ENCODE measurements at regions of chr17 and their contacts with region 1.

Region 1: DNA sequence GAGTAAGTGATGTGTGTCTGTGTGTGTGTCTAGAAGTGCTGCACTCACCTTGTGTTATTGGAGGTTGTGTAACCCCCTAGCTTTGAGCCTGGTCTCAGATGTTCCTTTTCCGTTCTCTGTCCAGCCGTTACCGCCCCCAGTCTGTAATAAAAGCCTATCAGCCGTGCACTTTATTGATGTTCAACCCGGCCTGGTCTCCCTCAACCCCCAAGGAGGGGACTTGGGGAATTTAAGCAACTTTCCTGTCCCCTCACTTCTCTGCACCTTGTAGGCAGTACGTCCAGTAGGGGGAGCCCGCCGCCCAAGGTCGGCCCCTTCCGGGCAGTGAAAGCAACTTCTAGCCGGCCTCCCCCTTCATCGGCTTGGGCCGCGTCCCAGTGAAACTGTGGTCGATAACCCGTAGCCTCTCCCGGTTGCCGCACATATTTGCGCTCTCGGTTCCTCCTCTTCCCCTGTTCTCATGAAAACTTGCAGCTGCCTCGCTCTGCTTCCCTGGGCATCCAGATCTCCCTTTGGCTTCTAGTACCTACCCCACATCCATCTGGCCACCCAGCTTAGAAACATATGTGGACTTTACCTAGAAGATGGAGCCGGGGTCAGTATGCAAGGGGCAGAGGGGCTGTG is 7.9 kb downstream of the PNPO start:
- DNase-seq: peak; percentile 86
- H3K4me3 Mint-ChIP-seq: peak overlapping the region; percentile 49
- H3K27ac Mint-ChIP-seq: peak overlapping the region; percentile 21
- H3K4me1 Mint-ChIP-seq: peaks cover 14% of the 10 kb centered on the region
- H3K27me3 Mint-ChIP-seq: no peaks in the 10 kb centered on the region
- CTCF ChIP-seq: peak; percentile 86

Region 2: DNA sequence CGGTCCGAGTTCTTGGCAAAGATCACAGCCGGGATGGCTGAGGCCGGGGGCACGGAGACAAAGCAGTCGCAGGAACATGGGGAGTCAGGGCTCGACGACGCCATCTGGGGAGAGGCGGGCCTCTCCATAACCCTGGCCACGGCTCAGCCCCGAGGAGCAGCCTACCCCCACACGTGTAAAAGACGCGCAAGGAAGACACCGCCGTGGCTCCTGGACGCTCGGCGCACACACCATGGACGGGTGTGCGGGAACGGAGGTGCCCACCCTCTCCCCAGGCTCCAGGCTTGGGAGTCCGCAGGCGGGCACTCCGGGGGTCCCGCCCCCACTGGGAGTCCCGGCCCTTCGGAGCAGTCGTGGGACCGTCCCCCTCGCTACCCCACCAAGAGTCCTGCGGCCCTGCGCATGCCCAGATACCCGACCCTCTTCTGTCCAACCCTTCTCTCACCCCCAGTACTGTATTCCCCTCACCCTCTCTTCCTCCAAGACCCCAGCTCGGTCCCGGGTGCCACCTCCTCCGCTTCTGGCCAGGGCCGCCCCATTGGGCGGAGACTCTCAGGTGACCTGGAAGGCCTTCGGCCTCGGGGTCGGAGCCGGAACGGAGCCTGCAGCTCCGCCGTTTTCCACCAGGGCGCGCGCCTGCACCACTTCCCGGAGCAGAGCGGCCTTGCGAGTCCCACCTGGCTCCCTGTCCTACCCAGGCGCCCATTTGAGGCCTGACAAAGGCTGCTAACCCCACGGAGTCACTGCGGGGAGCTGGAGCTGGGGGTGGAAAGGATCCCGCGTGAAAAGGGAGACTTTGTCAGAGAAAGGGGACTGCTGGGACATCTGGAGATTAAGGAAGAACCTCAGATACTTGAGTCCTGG is 108.3 kb before region 1 on chr17 and contains the start of gene SCRN2:
- CTCF ChIA-PET with region 1: interaction called, 19 read pairs
- POLR2A ChIA-PET with region 1: interaction called, 6 read pairs
- intact Hi-C with region 1: loop called (anchors 1 kb)
- DNase-seq: peak; percentile 88
- H3K4me3 Mint-ChIP-seq: peak within 1 kb of the TSS; percentile 81
- H3K27ac Mint-ChIP-seq: peak within 1 kb of the TSS; percentile 65
- H3K4me1 Mint-ChIP-seq: peaks cover 7% of the 10 kb centered on the region
- H3K27me3 Mint-ChIP-seq: no peaks in the 10 kb centered on the region
- CTCF ChIP-seq: peak; percentile 99
- total RNA-seq, gene SCRN2: 15.7 and 16.2 TPM in 2 replicates

Region 3: DNA sequence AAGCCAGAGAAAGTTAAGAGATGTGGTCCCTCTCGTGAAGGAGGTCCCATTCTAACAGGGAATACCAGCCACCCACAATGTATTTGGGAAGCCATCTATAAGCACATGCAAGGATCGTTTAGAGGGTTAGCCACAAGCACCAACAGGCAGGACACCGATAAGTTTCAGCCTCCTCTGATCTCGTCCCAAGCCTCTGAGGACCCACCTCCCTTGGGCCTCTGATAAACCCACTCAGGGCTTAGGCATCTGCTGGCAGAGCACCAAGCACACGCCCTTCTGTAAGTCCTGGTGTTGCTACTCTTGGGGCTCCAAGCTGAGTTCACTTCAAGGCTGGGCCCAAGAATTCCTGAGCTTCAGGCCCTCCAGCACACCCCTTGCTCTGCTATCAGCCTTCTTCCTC is 13.3 kb before region 1 on chr17:
- CTCF ChIA-PET with region 1: interaction called, 18 read pairs
- POLR2A ChIA-PET with region 1: interaction called, 23 read pairs
- intact Hi-C with region 1: no loop called
- DNase-seq: peak; percentile 73
- H3K4me3 Mint-ChIP-seq: peak overlapping the region; percentile 43
- H3K27ac Mint-ChIP-seq: peak overlapping the region; percentile 95
- H3K4me1 Mint-ChIP-seq: peaks cover 38% of the 10 kb centered on the region
- H3K27me3 Mint-ChIP-seq: no peaks in the 10 kb centered on the region
- CTCF ChIP-seq: no peak

Region 4: GRCh38 chr17:47978324-47978723 is 29.1 kb after region 1 on chr17:
- CTCF ChIA-PET with region 1: interaction called, 336 read pairs
- POLR2A ChIA-PET with region 1: interaction called, 256 read pairs
- intact Hi-C with region 1: no loop called
- DNase-seq: peak; percentile 47
- H3K4me3 Mint-ChIP-seq: no peak overlapping the region
- H3K27ac Mint-ChIP-seq: no peak overlapping the region
- H3K4me1 Mint-ChIP-seq: no peaks in the 10 kb centered on the region
- H3K27me3 Mint-ChIP-seq: no peaks in the 10 kb centered on the region
- CTCF ChIP-seq: peak; percentile 50

Region 5: DNA sequence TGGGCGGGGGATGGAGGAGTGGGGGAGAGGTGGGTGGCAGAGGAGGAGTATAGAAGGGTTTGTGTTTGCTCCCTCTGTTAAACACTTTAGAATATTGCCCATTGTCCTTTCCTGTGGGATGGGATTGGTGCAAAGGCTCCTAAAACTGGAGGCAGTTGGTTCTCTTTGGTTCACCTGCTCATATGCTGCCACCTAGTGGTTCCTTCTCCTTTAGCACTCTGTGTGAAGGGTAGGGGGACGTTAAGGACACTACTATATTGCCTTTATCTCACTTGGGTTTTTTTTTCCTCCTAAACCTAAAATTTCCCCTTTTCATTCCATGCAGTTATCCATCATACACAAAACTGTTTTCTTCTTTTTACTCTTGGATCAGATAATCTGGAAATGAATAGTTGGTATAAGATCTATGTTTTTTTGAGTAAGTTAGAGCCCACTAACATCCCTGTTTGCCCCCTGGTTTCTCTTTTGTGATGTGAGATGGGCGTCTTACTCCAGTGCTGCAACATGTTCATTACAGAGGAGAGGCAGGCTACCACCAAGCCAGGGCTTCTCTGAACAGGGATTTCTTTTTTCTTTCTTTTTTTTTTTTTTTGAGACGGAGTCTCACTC is 182.1 kb after region 1 on chr17:
- CTCF ChIA-PET with region 1: interaction called, 3 read pairs
- POLR2A ChIA-PET with region 1: no interaction called
- intact Hi-C with region 1: loop called (anchors 5 kb)
- DNase-seq: peak; percentile 85
- H3K4me3 Mint-ChIP-seq: no peak overlapping the region
- H3K27ac Mint-ChIP-seq: no peak overlapping the region
- H3K4me1 Mint-ChIP-seq: peaks cover 13% of the 10 kb centered on the region
- H3K27me3 Mint-ChIP-seq: no peaks in the 10 kb centered on the region
- CTCF ChIP-seq: peak; percentile 76

Region 6: GRCh38 chr17:48153691-48154358 is 204.6 kb after region 1 on chr17:
- CTCF ChIA-PET with region 1: no interaction called
- POLR2A ChIA-PET with region 1: no interaction called
- intact Hi-C with region 1: no loop called
- DNase-seq: peak; percentile 47
- H3K4me3 Mint-ChIP-seq: no peak overlapping the region
- H3K27ac Mint-ChIP-seq: no peak overlapping the region
- H3K4me1 Mint-ChIP-seq: no peaks in the 10 kb centered on the region
- H3K27me3 Mint-ChIP-seq: peaks cover 53% of the 10 kb centered on the region
- CTCF ChIP-seq: peak; percentile 34

Measured in MCF 10A (cell line).